ENCODE measurements at regions of chr17 and their contacts with region 1.

Region 1: GRCh38 chr17:17783116-17783824 is 53.5 kb downstream of the SREBF1 start:
- DNase-seq: peak; percentile 82 to 91 (median 86)
- ATAC-seq: peak in 3 of 4 donors; percentile 23 to 55 (median 53)
- H3K4me3 ChIP-seq: peak overlapping the region; percentile 40 to 73 (median 62)
- H3K27ac ChIP-seq: peak overlapping the region; percentile 80 to 98 (median 92)
- H3K4me1 ChIP-seq: peaks cover 7 to 84% (median 61%) of the 10 kb centered on the region in 12 donors
- H3K27me3 ChIP-seq: peaks cover 0 to 15% (median 0%) of the 10 kb centered on the region in 9 donors
- CTCF ChIP-seq: peak in 4 of 12 donors; percentile 22 to 52 (median 42)
- POLR2A ChIP-seq: no peak

Region 2: GRCh38 chr17:17710728-17711541 is 72.3 kb before region 1 on chr17:
- intact Hi-C with region 1: no loop called
- DNase-seq: no peak
- ATAC-seq: peak in 2 of 4 donors; percentile 23 to 37
- H3K4me3 ChIP-seq: no peak overlapping the region
- H3K27ac ChIP-seq: peak overlapping the region in 8 of 12 donors; percentile 7 to 88 (median 20)
- H3K4me1 ChIP-seq: peaks cover 0 to 58% (median 38%) of the 10 kb centered on the region in 12 donors
- H3K27me3 ChIP-seq: no peaks in the 10 kb centered on the region
- CTCF ChIP-seq: no peak
- POLR2A ChIP-seq: no peak

Region 3: DNA sequence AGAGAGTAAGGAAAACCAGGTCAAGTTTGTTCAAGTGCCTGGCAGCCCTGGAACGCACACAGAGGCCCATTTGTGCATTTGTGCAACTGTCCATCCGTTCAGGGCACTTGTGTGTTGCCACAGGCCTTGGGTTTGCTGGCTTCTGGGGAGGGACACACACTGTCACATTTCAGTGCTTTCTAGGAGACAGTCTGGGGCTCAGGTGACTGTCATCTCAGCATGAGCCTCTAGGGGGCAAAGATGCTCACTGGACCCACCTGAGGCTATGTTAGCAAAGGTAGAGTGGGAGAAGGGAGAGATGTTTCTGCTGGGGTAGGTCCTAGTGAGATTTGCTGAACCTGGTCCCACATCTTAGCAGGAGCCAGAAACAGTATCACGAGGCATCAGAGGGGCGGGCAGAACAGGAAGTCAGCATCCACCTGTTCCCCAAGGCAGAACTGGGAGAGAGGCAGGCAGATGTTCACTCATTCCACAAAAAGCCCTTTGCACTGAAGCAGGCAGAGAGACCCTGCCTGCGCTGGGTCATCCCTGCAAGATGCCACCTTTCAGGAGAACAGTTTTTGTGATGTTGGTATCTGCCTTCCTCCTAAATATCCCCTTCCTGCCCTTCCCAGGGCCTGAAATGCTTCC is 53.5 kb before region 1 on chr17:
- intact Hi-C with region 1: loop called in 1 of 10 experiments (anchors 10 kb)
- DNase-seq: no peak
- ATAC-seq: peak in 2 of 4 donors; percentile 27 to 30
- H3K4me3 ChIP-seq: no peak overlapping the region
- H3K27ac ChIP-seq: peak overlapping the region in 4 of 12 donors; percentile 16 to 55 (median 28)
- H3K4me1 ChIP-seq: peaks cover 0 to 63% (median 38%) of the 10 kb centered on the region in 12 donors
- H3K27me3 ChIP-seq: no peaks in the 10 kb centered on the region
- CTCF ChIP-seq: peak; percentile 35 to 55 (median 44)
- POLR2A ChIP-seq: no peak

Region 4: DNA sequence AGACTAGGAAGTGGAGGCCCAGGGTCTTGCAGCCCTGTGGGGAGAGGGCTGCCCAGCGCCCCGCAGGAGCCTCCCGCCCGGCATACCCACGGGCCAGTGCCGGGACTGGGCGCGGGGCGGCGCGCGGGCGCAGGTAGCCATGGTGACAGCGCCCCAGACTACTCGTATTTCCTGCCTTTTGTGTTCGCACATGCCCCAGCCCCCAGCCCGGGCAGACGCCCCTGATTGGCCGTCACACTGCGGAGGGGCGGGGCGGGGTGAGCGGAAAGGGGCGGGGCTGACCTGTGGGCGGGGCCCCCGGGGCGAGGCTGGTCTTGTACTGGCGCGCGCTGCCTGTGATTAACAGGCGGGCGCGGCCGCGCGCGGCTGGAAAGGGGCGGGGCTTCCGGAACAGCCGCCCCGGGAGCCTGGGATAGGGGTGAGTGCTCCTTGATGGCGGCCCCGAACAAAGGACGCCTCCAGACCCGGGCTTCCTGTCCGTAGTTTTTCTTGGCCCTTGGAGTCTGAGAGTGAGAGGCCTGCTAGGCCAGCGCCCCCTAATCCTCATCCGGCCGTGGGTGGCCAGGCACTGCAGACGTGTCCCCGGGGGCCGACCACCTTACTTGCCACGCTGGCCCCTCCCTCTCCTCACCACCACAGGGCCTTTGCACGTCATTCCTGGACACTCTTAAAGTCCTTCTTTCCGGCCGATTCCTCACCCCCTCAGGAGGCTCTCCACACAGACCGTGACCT is 31.0 kb before region 1 on chr17:
- intact Hi-C with region 1: loop called in 1 of 10 experiments (anchors 2 kb)
- DNase-seq: peak; percentile 95 to 98 (median 96)
- ATAC-seq: peak; percentile 83 to 90 (median 89)
- H3K4me3 ChIP-seq: peak overlapping the region in 11 of 12 donors; percentile 8 to 61 (median 49)
- H3K27ac ChIP-seq: peak overlapping the region; percentile 67 to 93 (median 85)
- H3K4me1 ChIP-seq: peaks cover 3 to 93% (median 49%) of the 10 kb centered on the region in 12 donors
- H3K27me3 ChIP-seq: no peaks in the 10 kb centered on the region
- CTCF ChIP-seq: peak in 9 of 12 donors; percentile 10 to 45 (median 26)
- POLR2A ChIP-seq: peak in 1 of 2 donors; percentile 51

Measured in heart left ventricle (tissue), 16 donors.